ENCODE measurements at regions of chr5 and their contacts with region 1.

Region 1: DNA sequence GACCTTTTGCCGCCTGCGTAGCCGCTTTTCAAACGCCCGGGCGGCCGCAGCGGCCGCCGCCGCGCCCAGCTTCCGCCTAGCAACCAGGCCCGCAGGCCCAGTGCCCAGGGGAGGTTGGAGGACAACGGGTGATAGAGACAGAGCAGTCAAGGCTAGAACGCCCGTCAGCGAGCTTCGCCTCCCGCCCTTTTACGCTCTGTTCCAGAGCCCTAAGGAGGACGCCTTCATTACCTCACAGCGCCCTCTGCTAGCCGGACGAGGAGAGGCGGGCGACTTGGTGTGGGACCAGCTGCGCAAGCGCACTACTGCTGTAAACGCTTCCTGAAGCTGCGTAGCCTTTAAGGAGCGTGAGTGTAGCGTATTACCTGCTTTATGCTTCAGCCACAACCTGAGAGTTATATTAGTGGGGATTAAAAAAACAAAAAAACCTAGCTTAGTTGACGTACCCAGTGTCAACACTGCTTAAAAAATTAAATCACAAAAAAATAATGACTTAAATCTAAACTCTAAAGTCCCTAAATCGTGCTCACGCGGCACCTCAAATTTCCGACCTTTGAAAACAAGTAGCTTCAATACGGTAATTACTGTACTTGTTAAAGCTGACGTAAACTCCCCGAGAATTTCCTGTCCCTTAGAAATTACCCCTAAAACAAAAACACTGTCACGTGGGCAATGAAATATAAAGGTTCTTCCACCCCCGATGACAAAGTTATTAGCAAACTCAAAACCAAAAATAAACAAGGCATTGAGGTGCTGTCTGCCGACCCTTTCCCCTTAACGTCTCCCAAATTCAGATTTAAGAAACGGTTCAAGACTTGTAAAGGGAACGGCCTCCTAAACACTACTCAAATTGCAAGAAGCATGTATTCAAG is at the start of gene CEP120:
- DNase-seq: peak; percentile 98 to 100 (median 99)
- H3K4me3 ChIP-seq: peak within 1 kb of the TSS; percentile 23 to 84 (median 74)
- H3K27ac ChIP-seq: peak within 1 kb of the TSS; percentile 49 to 97 (median 93)
- H3K4me1 ChIP-seq: peaks cover 5 to 34% of the 10 kb centered on the region in 2 donors
- H3K27me3 ChIP-seq: no peaks in the 10 kb centered on the region
- CTCF ChIP-seq: peak; percentile 63 to 77 (median 71)
- POLR2A ChIP-seq: peak; percentile 92 to 98
- total RNA-seq, gene CEP120: 13.5 to 36.8 (median 21.6) TPM

Region 2: DNA sequence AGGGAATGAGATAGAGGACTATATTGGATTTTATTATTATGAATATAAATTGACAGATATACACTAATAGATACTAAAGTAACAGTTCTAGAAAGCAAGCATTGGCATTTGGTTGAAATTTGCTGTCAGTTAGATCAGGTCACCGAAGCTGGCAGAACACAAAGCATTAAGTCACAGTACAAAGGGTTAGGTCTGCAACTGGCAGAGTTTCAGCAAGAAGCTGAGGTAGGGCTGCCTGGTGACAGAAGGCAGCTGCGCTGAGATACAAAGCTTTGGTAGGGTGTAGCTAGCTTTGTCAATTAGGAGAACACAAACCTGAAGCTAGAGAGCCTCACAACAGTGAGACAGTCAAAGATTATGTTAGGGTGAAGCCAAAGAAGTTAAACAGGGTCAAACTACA is 82.1 kb after region 1 on chr5:
- intact Hi-C with region 1: loop called in 1 of 2 experiments (anchors 10 kb)
- DNase-seq: no peak
- H3K4me3 ChIP-seq: no peak overlapping the region
- H3K27ac ChIP-seq: no peak overlapping the region
- H3K4me1 ChIP-seq: no peaks in the 10 kb centered on the region
- H3K27me3 ChIP-seq: no peaks in the 10 kb centered on the region
- CTCF ChIP-seq: no peak
- POLR2A ChIP-seq: no peak

Region 3: GRCh38 chr5:123610665-123611405 is 187.3 kb after region 1 on chr5:
- intact Hi-C with region 1: loop called in 1 of 2 experiments (anchors 10 kb)
- DNase-seq: peak in 4 of 7 donors; percentile 11 to 40 (median 19)
- H3K4me3 ChIP-seq: no peak overlapping the region
- H3K27ac ChIP-seq: no peak overlapping the region
- H3K4me1 ChIP-seq: no peaks in the 10 kb centered on the region
- H3K27me3 ChIP-seq: no peaks in the 10 kb centered on the region
- CTCF ChIP-seq: peak; percentile 91 to 100 (median 96)
- POLR2A ChIP-seq: no peak

Region 4: DNA sequence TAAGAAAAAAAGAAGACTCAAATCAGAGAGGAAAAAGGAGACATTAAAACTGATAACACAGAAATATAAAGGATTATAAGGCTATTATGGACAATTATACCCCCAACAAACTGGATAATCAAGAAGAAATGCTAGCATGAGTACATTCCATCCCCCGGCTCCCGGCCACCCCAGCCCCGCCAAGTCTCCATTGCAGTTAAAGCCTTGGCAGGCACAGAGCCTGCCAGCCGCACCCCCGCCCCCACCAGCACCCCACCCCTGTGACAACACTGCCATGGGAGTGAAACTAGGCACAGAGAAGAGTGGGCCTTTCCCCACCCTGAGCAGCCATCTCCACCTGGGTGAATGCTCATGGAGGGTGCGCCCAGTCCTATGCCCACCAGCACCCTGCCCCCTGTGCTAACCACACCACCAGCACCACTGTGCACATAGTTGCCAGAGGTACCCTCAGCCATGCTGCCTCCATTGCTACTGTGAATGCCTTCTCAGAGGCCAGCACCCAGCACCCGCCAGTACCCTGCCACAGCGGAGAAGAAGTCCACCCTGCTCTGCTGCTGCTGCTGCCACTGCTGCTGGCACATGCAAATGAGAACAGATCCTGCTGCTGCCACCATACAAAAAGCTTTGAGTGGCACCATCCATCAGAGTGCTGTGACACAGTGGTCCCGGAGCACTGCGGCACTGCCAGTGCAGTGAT is 205.5 kb after region 1 on chr5:
- intact Hi-C with region 1: no loop called
- DNase-seq: no peak
- H3K4me3 ChIP-seq: no peak overlapping the region
- H3K27ac ChIP-seq: no peak overlapping the region
- H3K4me1 ChIP-seq: no peaks in the 10 kb centered on the region
- H3K27me3 ChIP-seq: no peaks in the 10 kb centered on the region
- CTCF ChIP-seq: no peak
- POLR2A ChIP-seq: no peak

Measured in adrenal gland (tissue), 19 donors.